Psoas muscle (tissue), 8 donors: ENCODE measurements at regions of chr14 and their contacts with region 1.

Region 1: DNA sequence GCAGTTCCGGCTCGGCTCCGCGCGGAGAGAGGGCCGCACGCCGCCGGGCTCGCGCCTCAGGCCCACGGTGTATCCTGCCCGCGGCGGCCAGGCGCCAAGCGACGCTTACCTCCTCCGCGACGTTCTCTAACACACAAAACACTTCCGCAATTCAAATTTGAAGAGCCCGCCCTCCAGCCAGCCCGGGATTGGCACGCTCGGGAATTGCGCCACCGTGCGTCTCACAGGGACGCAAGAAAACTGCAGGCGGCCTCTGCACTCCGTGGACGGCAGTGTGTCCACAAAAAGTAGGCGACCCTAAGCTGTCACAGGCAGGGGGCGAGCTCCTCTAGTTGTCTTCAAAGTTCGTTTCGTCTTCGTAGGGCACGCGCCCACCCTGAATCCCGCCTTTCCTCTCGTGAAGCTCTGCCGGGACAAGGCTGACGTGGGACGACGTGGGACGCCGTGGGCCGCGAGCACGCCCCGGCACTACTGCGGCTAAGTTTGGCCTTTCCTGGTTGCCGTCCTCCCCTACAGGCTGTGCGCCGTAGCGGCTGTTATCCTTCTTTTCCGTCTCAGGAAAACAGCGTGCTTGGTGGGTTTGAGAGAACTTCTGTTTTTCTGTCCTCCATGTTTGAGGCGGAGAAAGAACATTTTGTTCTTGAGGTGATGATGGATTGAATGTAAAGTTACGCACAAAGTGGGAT is at the start of gene MIS18BP1:
- DNase-seq: peak; percentile 96
- ATAC-seq: peak; percentile 96 to 97 (median 97)
- H3K4me3 ChIP-seq: peak within 1 kb of the TSS; percentile 87
- H3K27ac ChIP-seq: peak within 1 kb of the TSS; percentile 87
- H3K4me1 ChIP-seq: peaks cover 11% of the 10 kb centered on the region
- H3K27me3 ChIP-seq: no peaks in the 10 kb centered on the region
- CTCF ChIP-seq: peak; percentile 60
- total RNA-seq, gene MIS18BP1: 2.0 to 5.1 (median 3.2) TPM

Region 2: GRCh38 chr14:44897045-44897844 is 356.0 kb before region 1 on chr14:
- intact Hi-C with region 1: loop called in 1 of 2 experiments (anchors 5 kb)
- DNase-seq: peak; percentile 98
- ATAC-seq: peak; percentile 98 to 100 (median 99)
- H3K4me3 ChIP-seq: peak overlapping the region; percentile 95
- H3K27ac ChIP-seq: peak overlapping the region; percentile 99
- H3K4me1 ChIP-seq: peaks cover 16% of the 10 kb centered on the region
- H3K27me3 ChIP-seq: no peaks in the 10 kb centered on the region
- CTCF ChIP-seq: no peak